ENCODE measurements at regions of chr3 and their contacts with region 1.

Region 1: DNA sequence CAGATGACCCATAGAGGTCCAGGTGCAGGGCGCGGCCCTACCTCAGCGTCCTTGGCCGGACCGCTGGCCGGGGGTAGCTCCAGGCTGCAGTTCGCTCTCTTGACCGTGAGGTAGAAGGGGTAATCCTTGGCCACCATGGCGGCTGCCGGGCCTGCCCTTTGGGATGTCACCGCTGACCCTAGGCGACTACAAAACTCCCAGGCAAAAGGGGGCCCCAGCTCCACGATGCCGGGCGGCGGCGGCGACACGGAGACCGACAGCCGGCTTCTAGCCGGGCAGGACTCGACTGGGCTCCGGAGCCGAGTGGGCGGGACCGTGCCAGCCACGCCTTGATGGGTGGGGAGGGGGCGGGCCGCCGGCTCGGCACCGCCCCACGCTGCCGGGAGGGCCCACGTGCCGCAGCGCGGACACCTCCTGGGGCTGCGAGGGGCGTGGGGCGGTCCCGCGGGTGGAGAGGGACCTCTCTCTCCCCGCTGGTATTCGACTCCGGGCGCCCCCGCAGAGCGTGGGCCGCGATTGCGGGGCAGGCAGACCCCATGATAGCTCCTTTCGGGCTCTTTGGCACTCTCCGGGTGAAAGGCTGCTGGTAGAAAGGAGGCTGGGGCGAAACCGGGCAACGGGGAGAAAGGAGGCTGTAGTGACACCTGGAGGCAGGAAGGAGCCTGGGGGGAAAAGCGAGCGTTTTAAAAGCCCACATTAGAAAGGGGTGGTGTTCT is at the start of gene ARHGEF3:
- DNase-seq: peak; percentile 71 to 75
- ATAC-seq: peak; percentile 98
- H3K4me3 ChIP-seq: peak within 1 kb of the TSS; percentile 64
- H3K27ac ChIP-seq: peak within 1 kb of the TSS; percentile 83 to 91
- H3K4me1 ChIP-seq: no peaks in the 10 kb centered on the region
- CTCF ChIP-seq: peak; percentile 57
- EP300 ChIP-seq: no peak
- POLR2A ChIP-seq: peak; percentile 58
- RAD21 ChIP-seq: peak; percentile 37 to 41; a peak in 3 of 5 replicates
- polyA plus RNA-seq, gene ARHGEF3: 10.6 and 12.1 TPM in 2 replicates

Region 2: GRCh38 chr3:56783644-56784447 is 18.0 kb before region 1 on chr3:
- CTCF ChIA-PET with region 1: interaction called, 35 read pairs
- POLR2A ChIA-PET with region 1: no interaction called
- DNase-seq: peak; percentile 8 to 66
- ATAC-seq: peak; percentile 77 to 83
- H3K4me3 ChIP-seq: no peak overlapping the region
- H3K27ac ChIP-seq: peak overlapping the region; percentile 69 to 76
- H3K4me1 ChIP-seq: peaks cover 30% of the 10 kb centered on the region
- CTCF ChIP-seq: no peak
- EP300 ChIP-seq: no peak
- POLR2A ChIP-seq: no peak
- RAD21 ChIP-seq: no peak

Region 3: DNA sequence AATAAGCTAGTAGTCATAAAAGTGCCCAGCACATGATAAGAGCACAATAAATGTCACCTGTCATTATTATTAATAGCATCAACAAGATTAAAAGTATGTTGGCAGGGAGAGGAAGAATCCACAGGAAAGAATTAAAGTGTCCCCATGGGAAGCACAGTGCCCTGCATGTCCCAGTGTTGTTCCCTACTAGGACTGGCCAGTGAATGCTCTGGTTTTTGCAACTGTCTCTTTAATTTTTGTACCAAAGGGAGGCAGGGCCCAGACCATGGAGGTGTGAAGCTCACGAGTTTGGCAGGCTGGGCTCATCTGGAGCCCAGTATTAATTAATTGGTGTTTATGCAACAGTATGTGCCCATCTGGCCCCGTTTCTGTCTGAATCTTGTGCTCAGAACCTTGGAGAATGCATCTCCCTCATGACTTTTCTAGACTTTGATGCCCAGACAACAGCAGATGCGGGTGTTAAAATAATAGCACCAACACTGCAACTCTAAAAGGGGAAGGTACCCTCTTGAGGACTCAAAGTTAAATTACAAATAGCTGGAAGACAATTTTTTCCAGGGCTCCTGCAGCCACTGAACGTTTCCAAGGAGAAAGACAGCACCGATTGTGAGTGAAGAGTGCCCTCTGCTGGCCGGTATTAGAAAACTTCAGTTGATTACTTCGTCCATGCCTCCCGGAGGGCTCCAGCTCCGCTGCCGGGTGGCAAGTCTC is 186.8 kb after region 1 on chr3:
- CTCF ChIA-PET with region 1: interaction called, 55 read pairs
- POLR2A ChIA-PET with region 1: no interaction called
- DNase-seq: peak; percentile 43 to 67
- ATAC-seq: peak; percentile 82 to 92
- H3K4me3 ChIP-seq: no peak overlapping the region
- H3K27ac ChIP-seq: no peak overlapping the region
- H3K4me1 ChIP-seq: peaks cover 21% of the 10 kb centered on the region
- CTCF ChIP-seq: peak; percentile 86
- EP300 ChIP-seq: no peak
- POLR2A ChIP-seq: no peak
- RAD21 ChIP-seq: peak; percentile 85 to 91